SK-N-SH (cell line): ENCODE measurements at regions of chr14 and their contacts with region 1.

Region 1: GRCh38 chr14:70907176-70907995 is at the start of gene PCNX1:
- DNase-seq: peak; percentile 98
- H3K4me3 ChIP-seq: peak within 1 kb of the TSS; percentile 80 to 96
- H3K27ac ChIP-seq: peak within 1 kb of the TSS; percentile 84 to 93
- H3K4me1 ChIP-seq: peaks cover 8 to 16% of the 10 kb centered on the region in 2 experiments; a peak in 3 of 4 replicates
- H3K27me3 ChIP-seq: no peaks in the 10 kb centered on the region
- CTCF ChIP-seq: peak; percentile 72
- EP300 ChIP-seq: no peak
- RAD21 ChIP-seq: peak; percentile 61
- polyA plus RNA-seq, gene PCNX1: 9.4 and 13.6 TPM in 2 replicates

Region 2: DNA sequence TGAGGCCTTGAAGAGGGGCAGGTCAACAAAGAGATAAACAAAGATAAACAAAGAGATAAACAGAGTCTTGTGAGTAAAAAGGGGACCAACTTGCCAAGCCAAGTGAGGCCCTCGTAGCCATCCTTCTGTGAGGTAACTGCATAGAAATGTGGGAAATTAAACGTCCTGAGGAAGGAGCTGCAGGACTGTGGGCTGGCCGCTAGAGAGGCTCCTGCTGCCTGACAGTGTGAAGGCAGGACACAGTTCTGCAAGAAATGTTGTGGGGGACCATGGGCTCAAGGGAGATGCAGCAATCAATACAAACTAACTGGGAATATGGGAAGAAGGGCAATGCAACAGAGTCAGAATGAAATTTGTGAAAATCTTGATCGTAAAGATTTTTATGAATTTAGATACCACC is 810.5 kb before region 1 on chr14:
- CTCF ChIA-PET with region 1: no interaction called
- POLR2A ChIA-PET with region 1: no interaction called
- DNase-seq: peak; percentile 34
- H3K4me3 ChIP-seq: no peak overlapping the region
- H3K27ac ChIP-seq: peak overlapping the region in 1 of 2 experiments; percentile 99; a peak in 2 of 4 replicates
- H3K4me1 ChIP-seq: peaks cover 0 to 58% of the 10 kb centered on the region in 2 experiments; a peak in 2 of 4 replicates
- H3K27me3 ChIP-seq: no peaks in the 10 kb centered on the region
- CTCF ChIP-seq: no peak
- EP300 ChIP-seq: no peak
- RAD21 ChIP-seq: peak; percentile 68

Region 3: GRCh38 chr14:70748422-70748821 is 159.0 kb before region 1 on chr14:
- CTCF ChIA-PET with region 1: no interaction called
- POLR2A ChIA-PET with region 1: no interaction called
- DNase-seq: no peak
- H3K4me3 ChIP-seq: no peak overlapping the region
- H3K27ac ChIP-seq: peak overlapping the region in 1 of 2 experiments; percentile 29; a peak in 1 of 4 replicates
- H3K4me1 ChIP-seq: no peaks in the 10 kb centered on the region
- H3K27me3 ChIP-seq: no peaks in the 10 kb centered on the region
- CTCF ChIP-seq: no peak
- EP300 ChIP-seq: no peak
- RAD21 ChIP-seq: no peak

Region 4: GRCh38 chr14:70821584-70822529 is 85.5 kb before region 1 on chr14:
- CTCF ChIA-PET with region 1: interaction called, 13 read pairs
- POLR2A ChIA-PET with region 1: no interaction called
- DNase-seq: peak; percentile 87
- H3K4me3 ChIP-seq: peak overlapping the region; percentile 65 to 91
- H3K27ac ChIP-seq: peak overlapping the region in 1 of 2 experiments; percentile 29; a peak in 1 of 4 replicates
- H3K4me1 ChIP-seq: peaks cover 0 to 7% of the 10 kb centered on the region in 2 experiments; a peak in 2 of 4 replicates
- H3K27me3 ChIP-seq: no peaks in the 10 kb centered on the region
- CTCF ChIP-seq: no peak
- EP300 ChIP-seq: no peak
- RAD21 ChIP-seq: no peak

Region 5: GRCh38 chr14:70886421-70887206 is 20.8 kb before region 1 on chr14:
- CTCF ChIA-PET with region 1: interaction called, 15 read pairs
- POLR2A ChIA-PET with region 1: no interaction called
- DNase-seq: no peak
- H3K4me3 ChIP-seq: no peak overlapping the region
- H3K27ac ChIP-seq: peak overlapping the region in 1 of 2 experiments; percentile 65; a peak in 1 of 4 replicates
- H3K4me1 ChIP-seq: peaks cover 3 to 59% of the 10 kb centered on the region in 2 experiments
- H3K27me3 ChIP-seq: no peaks in the 10 kb centered on the region
- CTCF ChIP-seq: no peak
- EP300 ChIP-seq: no peak
- RAD21 ChIP-seq: no peak

Region 6: GRCh38 chr14:70947711-70948110 is 40.3 kb after region 1 on chr14:
- CTCF ChIA-PET with region 1: interaction called, 59 read pairs
- POLR2A ChIA-PET with region 1: no interaction called
- DNase-seq: no peak
- H3K4me3 ChIP-seq: no peak overlapping the region
- H3K27ac ChIP-seq: no peak overlapping the region
- H3K4me1 ChIP-seq: no peaks in the 10 kb centered on the region
- H3K27me3 ChIP-seq: no peaks in the 10 kb centered on the region
- CTCF ChIP-seq: no peak
- EP300 ChIP-seq: no peak
- RAD21 ChIP-seq: no peak

Region 7: DNA sequence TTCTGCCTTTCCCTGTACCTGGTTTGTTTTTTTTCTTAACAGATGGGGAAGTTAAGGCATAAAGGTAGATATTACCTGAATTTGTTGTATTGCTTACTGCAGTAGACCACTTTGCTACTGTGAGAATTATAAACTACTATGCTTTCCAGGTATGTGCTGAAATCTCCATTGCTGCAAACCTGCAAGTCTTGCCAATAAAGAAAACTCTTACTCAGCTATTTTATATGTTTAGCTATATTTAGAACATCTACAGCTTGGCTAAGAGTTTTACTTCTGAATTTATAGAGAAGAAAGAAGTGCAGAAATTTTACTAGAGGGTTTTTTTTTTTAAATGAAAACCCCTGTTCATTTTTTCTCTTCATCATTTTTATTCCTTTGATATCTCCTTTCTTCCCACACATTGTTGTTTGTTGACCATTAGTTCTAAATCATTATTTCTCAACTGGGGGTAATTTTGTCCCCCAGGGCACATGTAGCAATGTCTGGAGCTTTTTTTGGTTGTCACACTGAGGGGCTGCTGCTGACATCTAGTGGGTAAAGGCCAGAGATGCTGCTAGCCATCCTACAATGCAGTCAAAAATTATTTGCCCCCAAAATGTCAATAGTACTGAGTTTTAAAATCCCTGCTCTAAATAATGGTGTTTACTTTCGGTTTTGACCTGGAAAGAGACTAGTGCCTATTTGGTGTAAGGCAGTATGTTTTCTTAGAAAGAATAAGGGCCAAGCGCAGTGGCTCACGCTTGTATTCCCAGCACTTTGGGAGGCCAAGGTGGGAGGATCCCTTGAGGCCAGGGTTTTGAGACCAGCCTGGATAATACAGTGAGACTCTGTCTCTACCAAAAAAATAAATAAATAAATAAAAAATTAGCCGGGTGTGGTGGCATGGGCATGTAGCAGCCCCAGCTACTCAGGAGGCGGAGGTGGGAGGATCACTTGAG is 48.4 kb after region 1 on chr14:
- CTCF ChIA-PET with region 1: interaction called, 59 read pairs
- POLR2A ChIA-PET with region 1: no interaction called
- DNase-seq: peak; percentile 25
- H3K4me3 ChIP-seq: 0 out of 4 replicates have a peak overlapping the region, but pooled peaks of 1 of the 2 experiments have one; percentile 8
- H3K27ac ChIP-seq: no peak overlapping the region
- H3K4me1 ChIP-seq: peaks cover 0 to 10% of the 10 kb centered on the region in 2 experiments; a peak in 2 of 4 replicates
- H3K27me3 ChIP-seq: no peaks in the 10 kb centered on the region
- CTCF ChIP-seq: peak; percentile 84
- EP300 ChIP-seq: no peak
- RAD21 ChIP-seq: peak; percentile 82

Region 8: DNA sequence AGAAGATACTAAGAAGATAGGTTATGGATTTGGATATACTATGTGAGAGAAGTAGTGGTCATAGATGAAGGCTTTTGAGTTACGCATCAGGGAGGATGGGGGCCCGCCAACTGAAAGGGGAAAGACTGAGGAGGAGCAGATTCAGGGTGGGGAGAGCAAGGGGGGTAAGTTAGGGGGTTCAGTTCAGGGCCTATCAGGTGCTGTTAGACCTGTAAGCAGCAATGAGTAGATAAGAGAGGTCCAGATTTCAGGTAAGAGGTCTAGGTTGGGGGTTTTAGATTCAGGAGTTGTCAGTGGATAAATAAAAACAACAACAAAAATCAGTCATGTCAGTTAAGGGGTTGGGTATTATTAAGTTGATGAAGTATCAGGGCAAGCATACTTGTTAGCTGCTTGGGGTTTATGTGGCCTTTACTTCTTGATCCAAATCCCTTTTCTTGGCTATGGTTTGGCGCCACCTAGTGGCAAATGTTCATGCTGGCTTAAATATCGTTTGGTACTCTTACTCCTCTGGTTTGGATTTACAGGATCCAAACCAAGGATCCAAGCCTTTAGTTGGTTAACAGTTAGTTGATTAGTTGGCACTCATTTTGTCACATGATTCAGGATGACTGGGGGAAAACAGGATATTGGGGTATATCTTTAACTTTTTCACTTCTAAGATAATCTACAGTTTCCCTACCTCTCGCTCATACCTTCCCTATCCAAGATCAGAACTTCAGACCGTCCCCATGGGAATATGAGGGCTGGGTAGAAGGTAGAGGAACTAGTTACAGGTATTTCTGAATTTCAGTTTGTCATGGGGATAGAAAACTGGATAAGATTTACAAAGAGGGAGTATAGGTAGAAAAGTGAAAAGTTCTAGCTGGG is 65.0 kb after region 1 on chr14:
- CTCF ChIA-PET with region 1: interaction called, 41 read pairs
- POLR2A ChIA-PET with region 1: interaction called, 3 read pairs
- DNase-seq: peak; percentile 62
- H3K4me3 ChIP-seq: no peak overlapping the region
- H3K27ac ChIP-seq: no peak overlapping the region
- H3K4me1 ChIP-seq: no peaks in the 10 kb centered on the region
- H3K27me3 ChIP-seq: no peaks in the 10 kb centered on the region
- CTCF ChIP-seq: peak; percentile 95
- EP300 ChIP-seq: no peak
- RAD21 ChIP-seq: peak; percentile 84

Region 9: DNA sequence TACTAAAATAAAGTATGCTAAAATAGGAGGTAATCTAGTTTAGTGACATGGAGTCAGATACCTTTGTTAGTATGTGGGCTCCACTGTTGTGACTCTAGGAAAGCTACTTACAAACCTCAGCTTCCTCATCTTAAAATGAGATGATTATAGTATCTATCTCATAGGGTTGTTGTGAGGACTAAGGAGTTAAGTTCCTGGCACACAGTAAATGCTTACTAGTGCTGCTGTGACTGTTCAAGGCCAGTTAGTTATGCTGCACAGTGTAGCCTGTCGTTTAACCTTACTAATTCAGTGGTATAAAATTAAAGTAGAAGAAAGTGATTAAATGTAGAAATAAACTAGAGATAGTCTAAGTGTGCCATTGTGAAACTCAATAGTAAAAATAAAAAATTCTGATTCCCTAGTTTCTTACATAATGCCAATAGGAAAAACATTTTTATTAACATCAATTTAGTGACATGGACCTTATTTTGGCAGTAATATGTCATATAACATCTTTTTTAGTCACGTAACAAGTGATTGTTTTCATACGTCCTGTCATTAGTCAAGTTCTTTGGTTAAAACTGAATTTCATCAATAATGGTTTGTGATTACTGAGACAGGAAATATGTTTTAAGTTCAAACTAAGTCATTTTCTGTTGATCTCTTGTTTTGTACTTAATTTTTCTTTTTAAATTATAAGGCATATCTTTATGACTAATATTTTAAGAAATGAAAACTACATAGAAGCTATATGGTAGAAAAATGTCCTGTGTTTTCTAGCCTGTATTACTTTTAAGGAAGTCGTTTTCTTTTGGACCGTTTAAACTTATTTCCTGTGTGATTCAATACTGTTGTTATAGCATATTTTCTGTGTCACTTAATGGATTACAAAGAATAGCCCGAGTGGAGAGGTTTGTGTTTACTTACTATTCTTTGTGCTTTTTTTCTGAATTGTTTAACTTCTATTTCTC is 73.9 kb after region 1 on chr14:
- CTCF ChIA-PET with region 1: interaction called, 41 read pairs
- POLR2A ChIA-PET with region 1: no interaction called
- DNase-seq: no peak
- H3K4me3 ChIP-seq: no peak overlapping the region
- H3K27ac ChIP-seq: peak overlapping the region; percentile 30 to 81
- H3K4me1 ChIP-seq: peaks cover 19 to 21% of the 10 kb centered on the region in 2 experiments; a peak in 3 of 4 replicates
- H3K27me3 ChIP-seq: no peaks in the 10 kb centered on the region
- CTCF ChIP-seq: no peak
- EP300 ChIP-seq: no peak
- RAD21 ChIP-seq: no peak